OCI-LY7 (cell line): ENCODE measurements at regions of chr5 and their contacts with region 1.

Region 1: GRCh38 chr5:59390074-59390659 is 503.4 kb downstream of the PDE4D start:
- DNase-seq: peak; percentile 50
- H3K4me3 ChIP-seq: no peak overlapping the region
- H3K27ac ChIP-seq: no peak overlapping the region
- H3K4me1 ChIP-seq: no peaks in the 10 kb centered on the region
- CTCF ChIP-seq: peak; percentile 96

Region 2: GRCh38 chr5:59275510-59276324 is 114.5 kb before region 1 on chr5:
- CTCF ChIA-PET with region 1: no interaction called
- POLR2A ChIA-PET with region 1: no interaction called
- intact Hi-C with region 1: no loop called
- DNase-seq: no peak
- H3K4me3 ChIP-seq: no peak overlapping the region
- H3K27ac ChIP-seq: no peak overlapping the region
- H3K4me1 ChIP-seq: no peaks in the 10 kb centered on the region
- CTCF ChIP-seq: no peak

Region 3: GRCh38 chr5:59366784-59367183 is 23.4 kb before region 1 on chr5:
- CTCF ChIA-PET with region 1: no interaction called
- POLR2A ChIA-PET with region 1: no interaction called
- intact Hi-C with region 1: no loop called
- DNase-seq: no peak
- H3K4me3 ChIP-seq: no peak overlapping the region
- H3K27ac ChIP-seq: no peak overlapping the region
- H3K4me1 ChIP-seq: no peaks in the 10 kb centered on the region
- CTCF ChIP-seq: no peak

Region 4: DNA sequence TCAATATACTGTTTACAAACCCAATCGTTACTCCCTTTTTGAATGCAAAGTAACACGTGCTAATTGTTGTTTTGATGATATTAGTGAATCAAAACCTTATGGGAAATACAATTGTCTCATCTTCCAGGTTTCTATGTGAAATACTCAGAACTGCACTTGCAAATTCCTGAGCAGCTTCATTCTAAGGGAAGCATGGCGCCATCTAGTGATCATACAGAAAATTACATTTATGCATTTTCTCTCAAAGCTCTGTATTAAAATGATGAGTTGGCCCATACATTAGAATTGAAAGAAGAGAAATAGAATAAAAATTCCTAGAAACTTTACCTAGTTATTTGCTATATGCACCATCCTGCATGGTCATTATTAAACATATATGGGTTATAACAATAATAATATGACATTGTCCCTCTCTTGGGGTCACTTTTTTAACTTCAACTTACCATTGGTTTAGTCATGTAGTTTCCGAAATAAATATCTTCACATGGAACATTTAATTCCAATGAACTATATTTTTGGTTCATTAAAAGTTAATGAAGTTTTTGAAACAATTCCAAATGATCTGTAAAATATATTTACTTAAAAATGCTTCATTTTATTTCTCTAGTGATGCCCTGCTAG is 283.4 kb after region 1 on chr5:
- CTCF ChIA-PET with region 1: no interaction called
- POLR2A ChIA-PET with region 1: interaction called, 5 read pairs
- intact Hi-C with region 1: loop called (anchors 2 kb)
- DNase-seq: peak; percentile 71
- H3K4me3 ChIP-seq: no peak overlapping the region
- H3K27ac ChIP-seq: no peak overlapping the region
- H3K4me1 ChIP-seq: no peaks in the 10 kb centered on the region
- CTCF ChIP-seq: peak; percentile 97